ENCODE measurements at regions of chr10 and their contacts with region 1.

Region 1: DNA sequence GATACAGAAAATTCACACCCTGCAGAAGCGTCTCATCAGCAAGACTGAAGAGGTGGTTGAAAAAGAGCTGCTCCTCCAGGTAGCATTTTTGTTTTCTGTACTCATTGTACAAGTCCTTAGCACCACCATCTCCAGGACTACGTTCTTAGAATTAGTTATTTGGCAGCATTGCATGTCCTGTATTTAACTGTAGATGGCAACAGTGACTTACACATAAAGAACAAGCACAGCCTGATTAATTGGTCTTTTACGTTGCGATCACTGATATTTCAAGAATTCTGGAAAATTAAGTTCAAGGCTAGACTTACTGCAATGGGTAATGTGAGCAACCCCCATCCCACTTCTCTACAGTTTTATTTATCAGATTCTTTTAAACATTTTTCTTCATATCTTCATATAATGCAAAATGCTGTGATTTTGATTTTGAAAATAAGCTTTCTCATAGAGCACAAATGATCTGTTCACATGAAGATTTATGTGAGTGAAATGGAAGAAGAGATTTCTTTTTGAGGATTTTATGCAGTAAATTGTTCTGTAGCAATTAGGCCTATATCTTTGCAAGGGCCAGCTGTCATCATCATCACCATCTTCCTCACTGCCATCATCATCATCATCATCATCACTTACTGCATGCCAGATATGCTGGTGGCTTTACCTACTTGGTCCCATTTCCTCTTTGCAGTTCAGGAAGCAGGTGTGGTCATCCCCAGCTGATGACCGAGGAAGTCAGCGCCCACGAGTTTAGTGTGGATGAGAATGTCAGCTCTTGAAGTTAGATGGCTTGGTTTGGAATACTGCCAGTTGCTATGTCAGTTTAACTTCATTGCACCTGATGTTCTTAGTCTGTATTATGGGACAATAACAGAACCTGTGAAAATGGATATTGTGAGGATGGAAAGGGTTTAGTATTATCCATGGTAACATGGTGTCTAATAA is 53.4 kb downstream of the CFAP58 start:
- DNase-seq: no peak
- ATAC-seq: no peak
- H3K4me3 Mint-ChIP-seq: no peak overlapping the region
- H3K27ac Mint-ChIP-seq: no peak overlapping the region
- H3K4me1 Mint-ChIP-seq: peaks cover 2% of the 10 kb centered on the region
- H3K27me3 Mint-ChIP-seq: peaks cover 7% of the 10 kb centered on the region
- CTCF ChIP-seq: peak; percentile 50

Region 2: GRCh38 chr10:104614245-104614831 is 207.4 kb after region 1 on chr10:
- CTCF ChIA-PET with region 1: interaction called, 8 read pairs
- POLR2A ChIA-PET with region 1: no interaction called
- intact Hi-C with region 1: loop called (anchors 10 kb)
- DNase-seq: peak; percentile 61
- ATAC-seq: peak; percentile 74
- H3K4me3 Mint-ChIP-seq: no peak overlapping the region
- H3K27ac Mint-ChIP-seq: no peak overlapping the region
- H3K4me1 Mint-ChIP-seq: no peaks in the 10 kb centered on the region
- H3K27me3 Mint-ChIP-seq: peaks cover 13% of the 10 kb centered on the region
- CTCF ChIP-seq: peak; percentile 68

Measured in activated CD8-positive, alpha-beta T cell treated with anti-CD3 and anti-CD28 coated beads for 36 hours (primary cell).